Activated T-helper 1 cell treated with anti-CD3 and anti-CD28 coated beads, Interleukin-12 subunit alpha, Interleukin-12 subunit beta, Interleukin-2, Interleukin-4 antibody, amounts not matched to agents 30 ng/mL and 10 ng/mL and 1 ng/mL, durations not matched to agents 14 hours and 24 hours and 36 hours (primary cell): ENCODE measurements at regions of chr2 and their contacts with region 1.

Region 1: DNA sequence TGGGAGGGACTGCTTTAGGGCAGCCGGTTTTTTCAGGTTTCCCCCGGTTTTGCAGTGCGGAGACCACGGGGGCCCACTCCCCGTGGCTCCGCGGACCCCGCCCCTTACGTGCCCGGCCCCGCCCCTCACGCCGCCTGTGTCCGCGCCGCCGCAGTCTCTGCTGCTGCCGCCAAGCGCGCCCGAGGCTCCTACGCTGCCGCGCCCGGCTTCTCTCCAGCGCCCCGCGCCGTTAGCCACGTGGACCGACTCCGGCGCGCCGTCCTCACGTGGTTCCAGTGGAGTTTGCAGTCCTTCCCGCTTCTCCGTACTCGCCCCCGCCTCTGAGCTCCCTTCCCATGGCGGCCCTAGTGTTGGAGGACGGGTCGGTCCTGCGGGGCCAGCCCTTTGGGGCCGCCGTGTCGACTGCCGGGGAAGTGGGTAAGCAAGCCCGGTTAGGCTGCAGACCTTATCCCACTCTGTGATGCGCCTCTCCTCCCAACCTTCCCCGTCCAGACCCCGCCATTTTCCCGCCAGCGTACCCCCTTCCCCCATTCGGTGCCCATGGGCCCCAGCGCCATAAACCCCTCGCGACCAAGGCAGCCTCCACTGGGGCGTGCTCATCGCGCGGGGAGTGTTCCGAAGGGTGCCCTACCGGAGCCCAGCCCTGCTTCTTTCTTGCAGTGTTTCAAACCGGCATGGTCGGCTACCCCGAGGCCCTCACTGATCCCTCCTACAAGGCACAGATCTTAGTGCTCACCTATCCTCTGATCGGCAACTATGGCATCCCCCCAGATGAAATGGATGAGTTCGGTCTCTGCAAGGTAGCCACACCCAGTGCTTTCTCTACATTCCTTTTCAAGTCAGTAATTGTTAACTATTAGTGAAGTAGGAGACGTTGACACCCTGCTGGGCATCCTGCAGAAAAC is at the start of gene CAD:
- DNase-seq: peak; percentile 85
- H3K4me3 Mint-ChIP-seq: peak within 1 kb of the TSS; percentile 98
- H3K27ac Mint-ChIP-seq: peak within 1 kb of the TSS; percentile 94
- H3K4me1 Mint-ChIP-seq: peaks cover 58% of the 10 kb centered on the region
- H3K27me3 Mint-ChIP-seq: no peaks in the 10 kb centered on the region
- total RNA-seq, gene CAD: 135 and 138 TPM in 2 replicates

Region 2: DNA sequence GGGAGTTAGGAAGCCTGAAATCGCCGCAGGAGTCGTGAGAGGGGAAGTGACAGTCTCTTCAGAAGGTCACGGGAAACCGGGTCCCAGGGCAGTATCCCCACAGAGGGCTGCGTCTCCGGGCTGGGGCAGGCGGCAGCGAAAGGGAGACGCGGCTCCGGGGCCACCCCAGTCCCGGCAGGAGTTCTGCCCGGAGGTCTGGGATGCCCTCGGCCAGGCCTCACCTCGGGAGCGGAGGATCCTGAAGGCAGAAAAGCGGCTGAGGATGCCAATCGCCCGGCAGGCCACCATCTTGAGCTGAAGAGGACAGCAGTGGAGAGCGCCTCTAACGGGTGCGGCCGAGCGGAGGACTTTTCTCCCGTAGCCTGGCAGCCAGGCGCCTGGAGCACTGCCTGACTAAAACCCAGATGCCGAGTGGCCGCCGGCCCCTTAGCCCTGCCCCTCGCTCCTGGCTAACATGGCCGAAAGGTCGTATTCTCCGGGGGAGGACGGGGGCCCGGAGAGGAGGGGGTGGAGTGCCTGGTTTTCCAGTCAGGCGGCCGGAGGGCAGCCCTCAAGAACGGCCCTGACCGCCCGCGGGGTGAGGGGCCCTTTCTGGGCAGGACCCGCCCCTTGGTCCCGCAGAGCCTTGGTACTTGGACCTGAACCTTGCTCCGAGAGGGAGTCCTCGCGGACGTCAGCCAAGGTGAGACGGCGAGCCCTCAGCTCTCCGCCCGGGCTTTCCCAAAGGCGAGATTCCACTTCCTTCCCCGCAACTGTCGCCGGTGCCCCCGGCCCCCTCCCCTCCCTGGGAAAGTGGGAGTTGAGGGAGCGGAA is 973.0 kb before region 1 on chr2 and contains the starts of genes HADHA and HADHB:
- intact Hi-C with region 1: loop called (anchors 5 kb)
- DNase-seq: peak; percentile 76
- H3K4me3 Mint-ChIP-seq: peak within 1 kb of the TSS; percentile 98
- H3K27ac Mint-ChIP-seq: peak within 1 kb of the TSS; percentile 96
- H3K4me1 Mint-ChIP-seq: peaks cover 44% of the 10 kb centered on the region
- H3K27me3 Mint-ChIP-seq: peaks cover 8% of the 10 kb centered on the region
- total RNA-seq, gene HADHA: 96.8 and 99.9 TPM in 2 replicates
- total RNA-seq, gene HADHB: 78.8 and 78.9 TPM in 2 replicates

Region 3: DNA sequence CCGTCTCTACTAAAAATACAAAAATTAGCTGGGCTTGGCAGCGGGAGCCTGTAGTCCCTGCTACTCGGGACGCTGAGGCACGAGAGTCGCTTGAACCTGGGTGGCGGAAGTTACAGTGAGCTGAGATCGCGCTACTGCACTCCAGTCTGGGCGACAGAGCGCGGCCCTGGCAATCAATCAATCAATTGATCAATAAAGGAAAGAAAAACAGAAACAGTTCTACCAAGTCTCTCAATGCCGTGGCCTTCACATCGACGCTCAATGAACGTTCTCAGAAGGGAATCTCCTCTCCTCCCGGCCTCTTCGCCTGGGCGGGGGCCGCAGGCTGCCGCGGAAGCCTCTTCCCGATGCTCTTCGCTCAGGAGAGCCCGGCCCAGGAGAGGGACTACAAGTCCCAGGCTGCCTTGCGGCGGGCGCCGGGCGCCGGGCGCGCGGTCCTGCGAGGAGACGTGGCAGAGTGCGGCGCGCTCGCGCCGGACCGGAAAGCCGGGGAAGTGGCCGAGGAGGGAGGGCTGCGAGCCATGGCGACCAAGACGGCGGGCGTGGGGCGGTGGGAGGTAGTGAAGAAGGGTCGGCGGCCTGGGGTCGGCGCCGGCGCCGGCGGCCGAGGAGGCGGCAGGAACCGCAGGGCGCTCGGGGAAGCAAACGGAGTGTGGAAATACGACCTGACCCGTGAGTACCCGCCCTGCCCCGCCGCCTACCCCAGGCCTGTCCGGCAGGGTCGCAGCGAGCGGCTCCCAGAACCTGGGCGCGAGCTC is 184.8 kb before region 1 on chr2 and contains the start of gene TMEM214:
- intact Hi-C with region 1: loop called (anchors 2 kb)
- DNase-seq: peak; percentile 83
- H3K4me3 Mint-ChIP-seq: peak within 1 kb of the TSS; percentile 96
- H3K27ac Mint-ChIP-seq: peak within 1 kb of the TSS; percentile 90
- H3K4me1 Mint-ChIP-seq: peaks cover 46% of the 10 kb centered on the region
- H3K27me3 Mint-ChIP-seq: no peaks in the 10 kb centered on the region
- total RNA-seq, gene TMEM214: 97.5 and 98.1 TPM in 2 replicates

Region 4: GRCh38 chr2:27123302-27124231 is 93.9 kb before region 1 on chr2 and contains the start of gene ABHD1:
- intact Hi-C with region 1: loop called (anchors 2 kb)
- DNase-seq: peak; percentile 71
- H3K4me3 Mint-ChIP-seq: peak within 1 kb of the TSS; percentile 88
- H3K27ac Mint-ChIP-seq: peak within 1 kb of the TSS; percentile 55
- H3K4me1 Mint-ChIP-seq: peaks cover 18% of the 10 kb centered on the region
- H3K27me3 Mint-ChIP-seq: peaks cover 31% of the 10 kb centered on the region
- total RNA-seq, gene ABHD1: 0.34 and 0.96 TPM in 2 replicates

Region 5: GRCh38 chr2:27264753-27265535 is 47.5 kb after region 1 on chr2:
- intact Hi-C with region 1: loop called (anchors 1 kb)
- DNase-seq: peak; percentile 32
- H3K4me3 Mint-ChIP-seq: peak overlapping the region; percentile 43
- H3K27ac Mint-ChIP-seq: peak overlapping the region; percentile 7
- H3K4me1 Mint-ChIP-seq: peaks cover 14% of the 10 kb centered on the region
- H3K27me3 Mint-ChIP-seq: peaks cover 44% of the 10 kb centered on the region

Region 6: DNA sequence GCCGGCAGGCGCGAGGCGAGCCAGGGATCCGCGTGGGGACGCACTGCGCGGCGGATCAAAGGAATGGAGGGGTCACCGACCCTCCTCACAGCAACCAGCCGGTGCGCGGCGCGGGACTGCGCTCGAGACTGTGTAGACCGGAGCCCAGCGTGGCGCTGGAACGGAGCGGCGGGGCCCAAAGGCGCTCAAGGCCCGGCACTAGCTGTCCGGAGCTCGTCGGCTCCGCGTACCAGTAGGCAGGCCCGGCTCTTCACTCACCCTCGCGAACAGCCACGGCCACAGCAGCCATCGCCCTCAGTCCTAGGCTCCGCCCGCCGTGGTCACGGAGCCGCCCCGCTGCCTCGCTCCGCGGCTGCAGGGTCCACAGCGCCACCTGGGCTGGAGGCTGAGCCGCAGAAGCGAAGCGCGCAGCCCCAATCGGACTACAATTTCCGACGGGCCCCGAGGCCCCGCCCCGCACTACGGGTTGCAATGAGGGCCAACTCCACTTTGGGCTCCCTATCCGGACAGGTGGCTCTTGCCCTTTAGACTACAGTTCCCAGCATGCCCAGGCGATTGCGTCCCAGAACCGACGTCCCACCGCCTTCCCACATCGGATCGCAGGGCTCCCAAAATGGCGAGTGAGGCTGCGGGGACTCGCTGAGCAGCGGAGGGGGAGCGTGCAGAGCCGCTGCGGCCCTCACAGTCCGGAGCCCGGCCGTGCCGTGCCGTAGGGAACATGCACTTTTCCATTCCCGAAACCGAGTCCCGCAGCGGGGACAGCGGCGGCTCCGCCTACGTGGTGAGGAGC is 152.8 kb after region 1 on chr2 and contains the starts of genes EIF2B4 and SNX17:
- intact Hi-C with region 1: loop called (anchors 1 kb)
- DNase-seq: peak; percentile 100
- H3K4me3 Mint-ChIP-seq: peak within 1 kb of the TSS; percentile 96
- H3K27ac Mint-ChIP-seq: peak within 1 kb of the TSS; percentile 98
- H3K4me1 Mint-ChIP-seq: peaks cover 43% of the 10 kb centered on the region
- H3K27me3 Mint-ChIP-seq: no peaks in the 10 kb centered on the region
- total RNA-seq, gene EIF2B4: 53.9 and 55.8 TPM in 2 replicates
- total RNA-seq, gene SNX17: 134 and 137 TPM in 2 replicates

Region 7: DNA sequence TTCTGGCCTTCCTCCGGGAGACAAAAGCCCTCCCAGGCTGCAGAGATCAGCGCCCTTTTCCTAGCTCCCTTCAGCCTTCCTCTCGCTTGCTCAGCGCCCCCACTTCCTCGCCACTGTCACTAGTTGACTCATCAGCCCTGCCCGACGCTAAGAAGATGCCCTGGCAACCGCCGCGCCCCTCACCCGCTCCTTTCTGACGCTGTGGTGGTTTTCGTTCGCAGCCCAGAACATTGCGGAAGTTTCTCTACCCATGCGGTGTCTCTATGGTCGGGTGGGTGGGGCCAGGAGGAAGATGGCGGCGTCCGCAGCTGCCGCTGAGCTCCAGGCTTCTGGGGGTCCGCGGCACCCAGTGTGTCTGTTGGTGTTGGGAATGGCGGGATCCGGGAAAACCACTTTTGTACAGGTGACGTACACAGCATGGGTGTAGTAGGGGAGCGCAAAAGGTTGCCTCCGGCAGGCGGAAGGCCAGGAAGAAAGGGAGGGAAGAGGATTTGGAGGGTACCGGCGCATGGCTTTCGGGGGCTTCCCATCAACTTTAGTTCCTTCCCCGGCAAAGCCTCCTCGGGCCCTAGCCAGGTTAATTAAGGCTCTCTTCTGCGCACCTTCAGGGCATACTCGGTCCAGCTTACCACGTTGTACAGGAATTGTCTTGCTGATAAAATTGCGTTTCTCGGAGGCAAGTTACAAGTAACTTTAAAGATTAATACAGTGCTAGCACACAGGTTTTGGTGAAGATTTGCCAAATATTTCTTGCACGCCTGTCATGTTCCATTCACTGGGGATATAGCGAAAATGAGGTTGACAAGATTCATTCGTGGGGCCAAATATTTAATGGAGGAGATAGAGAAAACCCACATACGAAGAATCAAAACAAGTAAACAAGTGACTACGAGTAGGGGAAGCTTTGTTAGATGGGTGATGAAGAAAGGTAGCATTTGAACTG is 411.6 kb after region 1 on chr2 and contains the starts of genes CCDC121 and GPN1:
- intact Hi-C with region 1: loop called (anchors 10 kb)
- DNase-seq: peak; percentile 93
- H3K4me3 Mint-ChIP-seq: no peak within 1 kb of the TSS
- H3K27ac Mint-ChIP-seq: peak within 1 kb of the TSS; percentile 73
- H3K4me1 Mint-ChIP-seq: peaks cover 20% of the 10 kb centered on the region
- H3K27me3 Mint-ChIP-seq: no peaks in the 10 kb centered on the region
- total RNA-seq, gene CCDC121: 0.66 and 1.3 TPM in 2 replicates
- total RNA-seq, gene GPN1: 48.3 and 51.0 TPM in 2 replicates